WTC11 (cell line): ENCODE measurements at regions of chr13 and their contacts with region 1.

Region 1: DNA sequence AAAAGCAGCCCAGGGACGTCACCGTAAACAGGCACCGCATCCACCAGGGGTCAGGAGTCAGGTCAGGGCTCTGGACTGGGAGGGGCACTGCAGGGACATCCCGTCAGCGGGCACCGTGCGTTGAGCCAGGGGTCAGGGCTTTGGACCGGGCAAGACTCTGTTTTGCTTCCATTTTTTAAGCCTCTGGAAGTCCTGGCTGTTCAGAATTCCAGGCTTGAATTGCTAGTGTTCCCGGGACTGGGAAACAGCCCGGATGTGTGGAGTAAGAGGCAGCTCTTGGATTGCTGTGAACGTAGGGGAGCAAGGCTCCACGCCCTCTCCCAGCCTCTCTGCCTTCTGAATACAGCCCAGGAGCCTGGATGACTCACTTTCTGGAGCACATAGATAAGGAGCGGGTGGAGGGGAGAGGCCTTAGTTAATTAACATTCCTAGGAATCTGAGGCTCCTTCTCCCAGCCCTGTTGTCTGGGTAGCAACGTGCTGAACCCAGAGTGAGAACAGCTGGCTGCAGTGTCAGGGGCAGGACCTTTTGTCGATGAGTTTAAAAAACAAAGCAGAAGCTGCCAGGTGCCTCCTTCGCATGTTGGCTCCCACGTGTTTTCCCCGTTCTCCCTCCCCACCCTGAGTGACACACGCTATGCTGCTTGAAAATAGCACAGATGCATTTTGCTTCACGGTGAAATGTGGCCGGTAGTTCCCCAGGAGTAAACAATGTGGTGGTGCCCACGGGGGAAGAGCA is 21.9 kb downstream of the ATP11A start:
- DNase-seq: peak; percentile 74
- ATAC-seq: peak; percentile 94
- H3K4me3 Mint-ChIP-seq: peak overlapping the region; percentile 40
- H3K27ac Mint-ChIP-seq: peak overlapping the region; percentile 95
- H3K4me1 Mint-ChIP-seq: peaks cover 93% of the 10 kb centered on the region
- H3K27me3 Mint-ChIP-seq: no peaks in the 10 kb centered on the region
- CTCF ChIP-seq: no peak

Region 2: DNA sequence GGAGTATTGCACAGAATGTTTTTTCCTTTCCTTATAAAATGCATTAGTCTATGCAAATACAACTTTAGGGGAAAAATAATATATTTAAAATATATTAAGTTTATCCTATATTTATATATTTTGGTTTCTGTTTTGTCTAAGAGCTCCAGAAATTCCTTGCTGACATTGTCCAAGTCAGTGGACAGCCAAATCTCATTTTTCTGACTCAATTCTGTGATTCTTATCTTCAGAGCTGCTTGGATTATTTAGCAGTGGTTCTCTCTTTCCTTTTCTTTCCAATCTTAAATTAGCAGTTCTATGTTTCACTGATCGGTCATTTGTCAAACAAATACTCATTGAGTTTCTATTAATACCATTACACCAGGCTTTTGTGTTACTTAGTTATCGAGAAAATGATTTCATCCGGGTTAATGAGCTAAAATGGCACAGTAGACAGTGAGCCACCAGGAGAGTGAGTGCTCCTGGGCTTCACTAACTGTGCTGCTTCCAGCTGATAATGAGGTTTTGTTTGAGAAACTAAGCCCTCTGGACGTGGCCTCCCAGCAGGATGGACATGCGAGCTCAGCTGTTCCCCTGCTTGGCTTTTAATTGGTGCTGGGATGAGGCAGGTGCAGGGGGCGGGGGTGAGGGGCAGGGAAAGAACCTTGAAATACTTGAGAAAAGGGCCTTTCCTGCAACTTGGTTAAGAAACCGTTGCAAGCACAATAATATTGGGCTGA is 22.1 kb after region 1 on chr13:
- CTCF ChIA-PET with region 1: interaction called, 13 read pairs
- POLR2A ChIA-PET with region 1: interaction called, 10 read pairs
- DNase-seq: peak; percentile 77
- ATAC-seq: peak; percentile 74
- H3K4me3 Mint-ChIP-seq: peak overlapping the region; percentile 53
- H3K27ac Mint-ChIP-seq: peak overlapping the region; percentile 100
- H3K4me1 Mint-ChIP-seq: peaks cover 96% of the 10 kb centered on the region
- H3K27me3 Mint-ChIP-seq: no peaks in the 10 kb centered on the region
- CTCF ChIP-seq: no peak

Region 3: DNA sequence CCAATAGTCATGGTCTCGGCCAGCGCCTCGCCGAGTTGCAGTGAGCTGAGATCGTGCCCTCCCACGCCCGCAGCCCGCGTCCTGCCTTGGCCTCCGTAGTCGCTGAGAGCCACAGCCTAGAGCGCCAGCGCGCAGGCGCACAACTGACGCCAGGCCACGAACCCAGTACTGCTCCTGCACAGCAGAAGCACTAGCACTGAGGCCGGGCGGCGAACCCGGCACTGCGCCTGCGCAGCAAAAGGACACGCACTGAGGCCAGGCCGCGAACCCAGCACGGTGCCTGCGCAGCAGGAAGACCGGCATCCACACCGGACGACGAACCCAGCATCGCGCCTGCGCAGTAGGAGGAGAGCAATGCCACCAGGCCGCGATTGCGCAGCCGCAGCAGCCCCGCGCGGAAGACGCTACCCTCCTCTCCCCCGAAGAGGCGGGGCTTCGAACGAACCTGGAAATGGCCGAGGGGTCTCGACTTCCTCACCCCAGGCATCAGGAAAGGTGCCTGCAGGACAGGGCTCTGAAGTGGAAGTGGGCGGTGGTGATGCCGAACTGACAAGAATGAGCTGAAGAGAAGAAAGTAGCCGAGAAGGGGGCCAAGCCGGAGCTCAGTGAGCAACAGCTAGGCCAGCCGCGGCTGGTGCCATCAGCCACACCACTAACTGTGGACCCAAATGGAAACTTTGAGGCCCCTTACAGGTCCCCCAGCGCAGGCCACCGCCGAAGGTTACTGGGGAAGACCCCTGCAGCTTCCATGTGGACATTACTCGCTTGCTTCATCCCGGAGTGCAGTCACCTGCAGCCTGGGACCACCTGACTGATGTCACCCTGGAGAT is 418.4 kb after region 1 on chr13:
- CTCF ChIA-PET with region 1: no interaction called
- POLR2A ChIA-PET with region 1: no interaction called
- DNase-seq: no peak
- ATAC-seq: no peak
- H3K4me3 Mint-ChIP-seq: no peak overlapping the region
- H3K27ac Mint-ChIP-seq: no peak overlapping the region
- H3K4me1 Mint-ChIP-seq: peaks cover 8% of the 10 kb centered on the region
- H3K27me3 Mint-ChIP-seq: no peaks in the 10 kb centered on the region
- CTCF ChIP-seq: no peak